Activated CD4-positive, alpha-beta T cell treated with anti-CD3 and anti-CD28 coated beads, Interleukin-2, amount 10 ng/mL, durations not matched to agents 24 days and 14 days (primary cell): ENCODE measurements at regions of chr18 and their contacts with region 1.

Region 1: DNA sequence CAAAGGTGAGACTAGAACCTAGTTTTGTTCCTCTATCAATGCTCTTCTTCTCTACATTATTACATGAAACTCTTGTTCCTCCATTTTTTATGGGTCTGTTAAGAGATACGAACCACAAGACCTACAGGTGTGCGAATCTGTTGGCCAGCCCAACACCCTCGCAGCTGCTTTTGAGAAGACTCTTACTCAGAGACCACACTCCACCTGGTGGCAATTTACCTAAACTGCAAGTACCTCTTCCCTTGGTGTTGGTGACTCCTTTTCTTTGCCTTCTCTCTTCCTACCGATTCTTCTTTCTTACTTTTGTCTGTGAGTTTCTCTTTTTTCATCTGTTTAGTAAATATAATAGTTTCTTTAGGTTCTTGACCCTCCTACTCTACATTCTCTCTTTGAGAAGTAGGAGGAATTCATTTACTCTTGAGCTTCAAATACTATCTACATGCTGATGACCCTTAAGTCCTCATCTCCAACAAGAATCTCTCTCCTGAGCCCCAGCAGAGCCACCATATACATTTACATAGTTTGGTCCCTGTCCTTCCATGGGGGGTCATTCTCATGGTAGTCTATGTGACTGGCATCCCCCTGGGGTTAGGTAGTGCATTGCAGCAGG is 81.8 kb upstream of the GAREM1 start:
- DNase-seq: peak; percentile 87
- H3K4me3 Mint-ChIP-seq: no peak overlapping the region
- H3K27ac Mint-ChIP-seq: no peak overlapping the region
- H3K4me1 Mint-ChIP-seq: no peaks in the 10 kb centered on the region
- H3K27me3 Mint-ChIP-seq: peaks cover 2% of the 10 kb centered on the region

Region 2: DNA sequence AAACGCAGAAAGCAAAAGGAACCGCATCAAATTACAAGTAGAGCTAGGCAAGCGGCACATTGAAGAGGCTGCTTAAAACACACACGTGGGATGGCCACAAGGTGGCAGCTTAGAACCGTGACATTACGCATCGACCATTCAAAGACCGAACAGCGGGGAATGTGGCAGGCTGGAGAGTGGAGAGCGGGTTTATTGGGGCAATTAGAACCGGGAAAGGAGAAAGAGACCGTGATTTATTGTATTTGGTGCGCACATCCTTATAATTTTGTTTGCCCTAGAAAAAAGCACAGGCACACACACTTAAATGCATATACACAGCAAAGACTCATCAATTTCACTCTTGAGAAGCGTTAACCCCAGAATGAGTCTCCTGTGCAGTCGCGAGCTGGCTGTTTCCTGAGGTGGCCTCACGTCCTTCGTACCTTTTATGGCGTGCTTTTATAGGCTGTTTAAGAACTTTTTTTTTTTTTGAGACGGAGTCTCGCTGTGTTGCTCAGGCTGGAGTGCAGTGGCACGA is 394.4 kb before region 1 on chr18:
- intact Hi-C with region 1: loop called (anchors 1 kb)
- DNase-seq: peak; percentile 90
- H3K4me3 Mint-ChIP-seq: peak overlapping the region; percentile 75
- H3K27ac Mint-ChIP-seq: no peak overlapping the region
- H3K4me1 Mint-ChIP-seq: peaks cover 9% of the 10 kb centered on the region
- H3K27me3 Mint-ChIP-seq: peaks cover 6% of the 10 kb centered on the region

Region 3: GRCh38 chr18:32271672-32272208 is 280.8 kb before region 1 on chr18:
- intact Hi-C with region 1: loop called (anchors 2 kb)
- DNase-seq: peak; percentile 60
- H3K4me3 Mint-ChIP-seq: no peak overlapping the region
- H3K27ac Mint-ChIP-seq: no peak overlapping the region
- H3K4me1 Mint-ChIP-seq: no peaks in the 10 kb centered on the region
- H3K27me3 Mint-ChIP-seq: peaks cover 5% of the 10 kb centered on the region

Region 4: GRCh38 chr18:32439802-32440201 is 112.7 kb before region 1 on chr18:
- intact Hi-C with region 1: loop called (anchors 10 kb)
- DNase-seq: no peak
- H3K4me3 Mint-ChIP-seq: no peak overlapping the region
- H3K27ac Mint-ChIP-seq: no peak overlapping the region
- H3K4me1 Mint-ChIP-seq: no peaks in the 10 kb centered on the region
- H3K27me3 Mint-ChIP-seq: peaks cover 12% of the 10 kb centered on the region